HepG2 (cell line): ENCODE measurements at regions of chr16 and their contacts with region 1.

Region 1: GRCh38 chr16:57300387-57301125 is 16.1 kb upstream of the PLLP start:
- DNase-seq: peak; percentile 99
- ATAC-seq: peak; percentile 72
- H3K4me3 ChIP-seq: peak overlapping the region; percentile 62 to 84 (median 63)
- H3K27ac ChIP-seq: peak overlapping the region; percentile 59
- H3K4me1 ChIP-seq: peaks cover 76% of the 10 kb centered on the region
- H3K27me3 ChIP-seq: no peaks in the 10 kb centered on the region; a peak in 1 of 5 replicates
- CTCF ChIP-seq: peak; percentile 100
- EP300 ChIP-seq: peak in 1 of 2 experiments; percentile 16; a peak in 1 of 4 replicates
- POLR2A ChIP-seq: no peak
- RAD21 ChIP-seq: peak; percentile 100

Region 2: GRCh38 chr16:57084257-57084770 is 216.2 kb before region 1 on chr16:
- CTCF ChIA-PET with region 1: interaction called, 3 read pairs
- POLR2A ChIA-PET with region 1: no interaction called
- in situ Hi-C with region 1: loop called (anchors 10 kb)
- intact Hi-C with region 1: loop called (anchors 2 kb)
- DNase-seq: peak; percentile 54
- ATAC-seq: peak; percentile 70
- H3K4me3 ChIP-seq: no peak overlapping the region
- H3K27ac ChIP-seq: no peak overlapping the region
- H3K4me1 ChIP-seq: peaks cover 15% of the 10 kb centered on the region
- H3K27me3 ChIP-seq: peaks cover 2 to 23% of the 10 kb centered on the region in 2 experiments; a peak in 4 of 5 replicates
- CTCF ChIP-seq: peak; percentile 97
- EP300 ChIP-seq: no peak
- POLR2A ChIP-seq: no peak
- RAD21 ChIP-seq: peak; percentile 88

Region 3: GRCh38 chr16:57167953-57168352 is 132.6 kb before region 1 on chr16:
- CTCF ChIA-PET with region 1: no interaction called
- POLR2A ChIA-PET with region 1: no interaction called
- in situ Hi-C with region 1: no loop called
- intact Hi-C with region 1: no loop called
- DNase-seq: peak; percentile 53
- ATAC-seq: peak; percentile 68
- H3K4me3 ChIP-seq: no peak overlapping the region
- H3K27ac ChIP-seq: no peak overlapping the region
- H3K4me1 ChIP-seq: peaks cover 9% of the 10 kb centered on the region
- H3K27me3 ChIP-seq: no peaks in the 10 kb centered on the region
- CTCF ChIP-seq: peak; percentile 77
- EP300 ChIP-seq: no peak
- POLR2A ChIP-seq: no peak
- RAD21 ChIP-seq: peak; percentile 49; the same call in 1 of the 2 replicates

Region 4: GRCh38 chr16:57185944-57186871 is 114.3 kb before region 1 on chr16 and contains the starts of genes PSME3IP1 and RSPRY1:
- CTCF ChIA-PET with region 1: no interaction called
- POLR2A ChIA-PET with region 1: interaction called, 7 read pairs
- in situ Hi-C with region 1: no loop called
- intact Hi-C with region 1: loop called (anchors 5 kb)
- DNase-seq: peak; percentile 100
- ATAC-seq: peak; percentile 94
- H3K4me3 ChIP-seq: peak within 1 kb of the TSS; percentile 93 to 99 (median 94)
- H3K27ac ChIP-seq: peak within 1 kb of the TSS; percentile 82
- H3K4me1 ChIP-seq: peaks cover 51% of the 10 kb centered on the region
- H3K27me3 ChIP-seq: no peaks in the 10 kb centered on the region; a peak in 2 of 5 replicates
- CTCF ChIP-seq: no peak; the same call in 1 of the 2 replicates
- EP300 ChIP-seq: peak in 1 of 2 experiments; percentile 20; a peak in 1 of 4 replicates
- POLR2A ChIP-seq: peak; percentile 75 to 94
- RAD21 ChIP-seq: 0 out of 2 replicates have a peak, but pooled peaks have one; percentile 11
- total RNA-seq, gene PSME3IP1: 99.8 and 104 TPM in 2 replicates
- total RNA-seq, gene RSPRY1: 51.7 and 53.4 TPM in 2 replicates

Region 5: GRCh38 chr16:57235128-57236021 is 65.2 kb before region 1 on chr16:
- CTCF ChIA-PET with region 1: no interaction called
- POLR2A ChIA-PET with region 1: no interaction called
- in situ Hi-C with region 1: no loop called
- intact Hi-C with region 1: no loop called
- DNase-seq: peak; percentile 29
- ATAC-seq: peak; percentile 46; the same call in 2 of the 3 replicates
- H3K4me3 ChIP-seq: no peak overlapping the region
- H3K27ac ChIP-seq: no peak overlapping the region
- H3K4me1 ChIP-seq: no peaks in the 10 kb centered on the region
- H3K27me3 ChIP-seq: no peaks in the 10 kb centered on the region
- CTCF ChIP-seq: no peak
- EP300 ChIP-seq: no peak
- POLR2A ChIP-seq: no peak
- RAD21 ChIP-seq: no peak

Region 6: DNA sequence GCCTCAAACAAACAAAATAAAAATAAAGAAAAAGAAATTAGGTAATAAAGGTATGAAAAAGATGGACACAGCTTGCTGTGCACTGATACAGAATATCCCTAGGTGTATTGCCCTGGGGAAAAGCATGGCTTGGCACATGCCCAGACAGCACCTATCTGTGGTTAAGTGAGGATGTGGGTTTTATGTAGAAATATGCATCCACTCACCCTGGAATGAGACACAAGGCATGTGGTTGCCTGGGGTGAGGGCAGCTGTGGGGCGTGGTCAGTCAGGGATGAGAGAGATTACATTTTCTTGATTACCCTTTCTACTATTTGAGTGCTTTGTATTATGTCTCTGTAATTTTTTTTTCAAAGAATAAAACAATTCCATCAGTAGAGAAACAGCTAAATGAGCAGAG is 23.0 kb before region 1 on chr16:
- CTCF ChIA-PET with region 1: no interaction called
- POLR2A ChIA-PET with region 1: interaction called, 21 read pairs
- in situ Hi-C with region 1: no loop called
- intact Hi-C with region 1: no loop called
- DNase-seq: no peak
- ATAC-seq: no peak
- H3K4me3 ChIP-seq: no peak overlapping the region
- H3K27ac ChIP-seq: no peak overlapping the region
- H3K4me1 ChIP-seq: peaks cover 100% of the 10 kb centered on the region
- H3K27me3 ChIP-seq: no peaks in the 10 kb centered on the region
- CTCF ChIP-seq: no peak
- EP300 ChIP-seq: no peak
- POLR2A ChIP-seq: no peak
- RAD21 ChIP-seq: no peak

Region 7: DNA sequence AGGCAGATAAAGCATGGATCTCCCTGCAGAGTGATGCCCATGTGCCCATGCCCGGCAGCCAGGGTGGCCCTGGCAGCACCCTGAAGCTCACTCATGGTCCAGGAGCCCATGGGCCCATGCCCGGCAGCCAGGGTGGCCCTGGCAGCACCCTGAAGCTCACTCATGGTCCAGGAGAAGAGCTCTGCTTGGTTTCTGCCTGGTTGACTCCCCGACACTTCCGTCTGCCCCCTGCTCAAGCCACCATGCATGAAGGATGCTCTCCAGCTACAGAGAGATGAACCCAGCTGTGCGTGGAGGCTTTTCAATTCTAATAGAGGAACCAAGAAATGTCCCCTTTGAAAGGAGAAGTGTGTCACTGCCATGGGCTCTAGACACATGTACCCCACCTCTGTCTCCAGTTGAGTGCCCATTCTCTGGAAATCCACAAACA is 112.8 kb after region 1 on chr16:
- CTCF ChIA-PET with region 1: interaction called, 142 read pairs
- POLR2A ChIA-PET with region 1: interaction called, 54 read pairs
- in situ Hi-C with region 1: loop called (anchors 5 kb)
- intact Hi-C with region 1: loop called (anchors 1 kb)
- DNase-seq: no peak
- ATAC-seq: no peak
- H3K4me3 ChIP-seq: no peak overlapping the region
- H3K27ac ChIP-seq: no peak overlapping the region
- H3K4me1 ChIP-seq: peaks cover 46% of the 10 kb centered on the region
- H3K27me3 ChIP-seq: peaks cover 10 to 55% of the 10 kb centered on the region in 2 experiments; a peak in 4 of 5 replicates
- CTCF ChIP-seq: no peak
- EP300 ChIP-seq: no peak
- POLR2A ChIP-seq: no peak
- RAD21 ChIP-seq: no peak

Region 8: DNA sequence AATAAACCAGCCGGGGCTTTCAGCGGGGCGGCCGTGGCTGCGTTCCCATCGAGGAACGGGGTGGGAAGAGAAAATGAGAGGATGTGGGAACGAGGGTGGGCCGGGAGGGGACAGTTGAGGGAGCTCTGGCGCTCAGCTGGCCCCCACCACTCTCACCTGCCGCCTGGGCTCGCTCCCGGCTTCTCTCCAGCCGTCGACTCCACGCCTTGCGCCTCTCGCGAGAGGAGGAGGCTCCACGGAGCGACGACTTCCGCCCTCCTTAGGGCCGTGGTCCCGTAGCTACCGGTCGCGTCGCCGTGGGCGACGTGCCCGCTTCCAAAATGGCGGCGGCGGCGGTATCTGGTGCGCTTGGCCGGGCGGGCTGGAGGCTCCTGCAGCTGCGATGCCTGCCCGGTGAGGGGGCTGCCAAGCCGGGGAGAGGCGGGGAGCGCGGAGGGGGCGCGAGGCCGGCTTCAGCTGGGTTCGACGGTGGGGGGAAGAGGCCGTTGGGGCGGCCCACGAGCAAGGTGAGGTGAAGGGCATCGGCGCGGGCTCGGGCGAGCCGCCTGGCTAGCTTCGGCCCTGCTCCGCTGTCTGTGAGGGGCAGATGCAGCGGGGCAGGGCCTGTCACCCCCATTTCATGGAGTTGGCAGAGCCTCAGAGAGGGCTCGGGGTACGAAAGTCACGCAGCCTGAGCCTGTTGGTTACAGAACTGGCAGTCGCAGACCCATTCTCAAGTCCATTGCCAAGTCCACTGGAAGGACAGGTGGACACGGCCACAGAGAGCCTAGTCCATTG is 146.8 kb after region 1 on chr16 and contains the starts of genes CIAPIN1 and COQ9:
- CTCF ChIA-PET with region 1: no interaction called
- POLR2A ChIA-PET with region 1: interaction called, 14 read pairs
- in situ Hi-C with region 1: no loop called
- intact Hi-C with region 1: no loop called
- DNase-seq: peak; percentile 92
- ATAC-seq: peak; percentile 99
- H3K4me3 ChIP-seq: peak within 1 kb of the TSS; percentile 81 to 95 (median 90)
- H3K27ac ChIP-seq: peak within 1 kb of the TSS; percentile 76
- H3K4me1 ChIP-seq: peaks cover 46% of the 10 kb centered on the region
- H3K27me3 ChIP-seq: no peaks in the 10 kb centered on the region; a peak in 1 of 5 replicates
- CTCF ChIP-seq: peak; percentile 41
- EP300 ChIP-seq: peak in 1 of 2 experiments; percentile 42; a peak in 1 of 4 replicates
- POLR2A ChIP-seq: peak; percentile 90 to 92; a peak in 3 of 4 replicates
- RAD21 ChIP-seq: peak; percentile 63; the same call in 1 of the 2 replicates
- total RNA-seq, gene CIAPIN1: 89.7 and 113 TPM in 2 replicates
- total RNA-seq, gene COQ9: 57.5 and 62.0 TPM in 2 replicates